Esophagus squamous epithelium (tissue), 5 donors: ENCODE measurements at regions of chr11 and their contacts with region 1.

Region 1: DNA sequence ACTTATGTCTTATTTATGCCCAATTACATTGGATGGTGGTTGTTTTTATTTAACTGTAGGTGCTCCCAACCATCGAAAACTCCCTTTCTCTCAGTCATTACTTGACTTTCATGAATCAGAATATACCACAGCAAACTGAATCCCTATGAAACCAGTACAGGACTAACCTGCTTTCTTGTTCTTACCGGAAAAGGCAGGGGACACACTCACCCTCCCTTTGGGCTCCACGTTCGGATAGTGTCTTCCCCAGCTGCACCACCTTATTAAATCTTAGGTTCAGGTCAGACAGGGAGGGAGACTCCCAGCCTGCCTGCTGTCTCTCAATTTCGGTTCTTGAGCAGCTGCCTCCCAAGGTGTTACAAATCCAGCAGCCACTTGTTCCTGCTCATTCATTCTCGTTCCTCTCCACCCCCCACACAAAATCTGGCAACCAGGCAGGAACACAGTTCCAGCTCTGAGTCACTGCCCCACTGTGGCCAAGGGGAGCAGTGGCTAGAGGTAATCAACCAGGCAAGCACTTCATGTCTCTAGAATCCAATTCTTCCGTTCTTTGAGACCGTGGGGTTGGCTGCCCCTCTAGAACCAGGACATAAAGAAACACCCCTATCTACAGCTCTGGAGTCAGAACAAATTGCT is 133.0 kb downstream of the PLEKHA7 start:
- DNase-seq: no peak
- H3K4me3 ChIP-seq: peak overlapping the region in 3 of 4 donors; percentile 3 to 38 (median 29)
- H3K27ac ChIP-seq: peak overlapping the region; percentile 74 to 84 (median 76)
- H3K4me1 ChIP-seq: peaks cover 9 to 87% (median 43%) of the 10 kb centered on the region in 3 donors
- H3K27me3 ChIP-seq: no peaks in the 10 kb centered on the region
- CTCF ChIP-seq: peak in 4 of 6 experiments; percentile 21 to 43 (median 33)
- POLR2A ChIP-seq: no peak

Region 2: GRCh38 chr11:16785520-16786128 is 95.6 kb before region 1 on chr11:
- intact Hi-C with region 1: loop called (anchors 5 kb)
- DNase-seq: no peak
- H3K4me3 ChIP-seq: no peak overlapping the region
- H3K27ac ChIP-seq: no peak overlapping the region
- H3K4me1 ChIP-seq: peaks cover 0 to 81% (median 26%) of the 10 kb centered on the region in 3 donors
- H3K27me3 ChIP-seq: no peaks in the 10 kb centered on the region
- CTCF ChIP-seq: peak; percentile 64 to 89 (median 84)
- POLR2A ChIP-seq: no peak